Naive thymus-derived CD4-positive, alpha-beta T cell (primary cell): ENCODE measurements at regions of chr12 and their contacts with region 1.

Region 1: GRCh38 chr12:11981121-11981733 is 89.5 kb upstream of the BCL2L14 start:
- DNase-seq: peak; percentile 12 to 87 (median 75)
- ATAC-seq: peak; percentile 95
- H3K4me3 ChIP-seq: peak overlapping the region; percentile 2
- H3K4me3 Mint-ChIP-seq: peak overlapping the region; percentile 2 to 71 (median 56)
- H3K27ac ChIP-seq: peak overlapping the region; percentile 52
- H3K27ac Mint-ChIP-seq: peak overlapping the region; percentile 66 to 98 (median 82)
- H3K4me1 ChIP-seq: peaks cover 23 to 28% of the 10 kb centered on the region in 2 donors
- H3K4me1 Mint-ChIP-seq: peaks cover 26 to 69% (median 48%) of the 10 kb centered on the region in 7 donors
- H3K27me3 ChIP-seq: no peaks in the 10 kb centered on the region
- H3K27me3 Mint-ChIP-seq: peaks cover 0 to 2% (median 0%) of the 10 kb centered on the region in 5 donors

Region 2: GRCh38 chr12:11901701-11902524 is 79.3 kb before region 1 on chr12:
- CTCF ChIA-PET with region 1: no interaction called
- POLR2A ChIA-PET with region 1: interaction called, 3 read pairs
- intact Hi-C with region 1: loop called in 1 of 2 experiments (anchors 1 kb)
- DNase-seq: peak in 1 of 9 donors; percentile 79
- ATAC-seq: no peak
- H3K4me3 ChIP-seq: no peak overlapping the region
- H3K4me3 Mint-ChIP-seq: peak overlapping the region in 8 of 10 donors; percentile 10 to 71 (median 36)
- H3K27ac ChIP-seq: no peak overlapping the region
- H3K27ac Mint-ChIP-seq: peak overlapping the region in 3 of 9 donors; percentile 29 to 73 (median 71)
- H3K4me1 ChIP-seq: peaks cover 0 to 6% of the 10 kb centered on the region in 2 donors
- H3K4me1 Mint-ChIP-seq: peaks cover 17 to 60% (median 44%) of the 10 kb centered on the region in 7 donors
- H3K27me3 ChIP-seq: no peaks in the 10 kb centered on the region
- H3K27me3 Mint-ChIP-seq: no peaks in the 10 kb centered on the region

Region 3: GRCh38 chr12:11958221-11959091 is 22.8 kb before region 1 on chr12:
- CTCF ChIA-PET with region 1: no interaction called
- POLR2A ChIA-PET with region 1: no interaction called
- intact Hi-C with region 1: loop called in 1 of 2 experiments (anchors 1 kb)
- DNase-seq: peak in 1 of 9 donors; percentile 65
- ATAC-seq: peak; percentile 34
- H3K4me3 ChIP-seq: no peak overlapping the region
- H3K4me3 Mint-ChIP-seq: peak overlapping the region in 1 of 10 donors; percentile 70
- H3K27ac ChIP-seq: no peak overlapping the region
- H3K27ac Mint-ChIP-seq: peak overlapping the region in 3 of 9 donors; percentile 9 to 93 (median 53)
- H3K4me1 ChIP-seq: peaks cover 0 to 4% of the 10 kb centered on the region in 2 donors
- H3K4me1 Mint-ChIP-seq: peaks cover 15 to 54% (median 20%) of the 10 kb centered on the region in 7 donors
- H3K27me3 ChIP-seq: no peaks in the 10 kb centered on the region
- H3K27me3 Mint-ChIP-seq: peaks cover 0 to 5% (median 0%) of the 10 kb centered on the region in 5 donors

Region 4: DNA sequence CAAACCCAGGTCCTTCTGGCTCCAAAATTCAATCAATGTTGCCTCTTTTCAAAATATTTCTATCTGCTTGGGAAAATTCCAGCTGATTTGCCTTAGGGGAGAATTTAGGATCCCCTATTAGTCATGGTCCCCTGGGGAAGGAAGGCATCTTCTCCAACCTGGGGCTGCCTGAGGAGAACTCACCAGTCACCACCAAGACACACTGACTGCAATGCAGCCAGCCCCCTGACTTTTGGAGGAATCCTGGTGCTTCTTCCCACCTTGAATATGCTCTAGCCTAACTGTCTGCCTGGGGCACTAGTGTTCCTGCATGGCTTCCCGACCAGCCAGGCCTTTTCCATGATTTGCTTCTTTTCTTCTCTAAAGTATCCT is 17.7 kb after region 1 on chr12:
- CTCF ChIA-PET with region 1: interaction called, 3 read pairs
- POLR2A ChIA-PET with region 1: interaction called, 6 read pairs
- intact Hi-C with region 1: loop called (anchors 1 to 2 kb)
- DNase-seq: no peak
- ATAC-seq: no peak
- H3K4me3 ChIP-seq: peak overlapping the region; percentile 48
- H3K4me3 Mint-ChIP-seq: peak overlapping the region; percentile 18 to 75 (median 58)
- H3K27ac ChIP-seq: peak overlapping the region; percentile 39
- H3K27ac Mint-ChIP-seq: peak overlapping the region; percentile 67 to 95 (median 92)
- H3K4me1 ChIP-seq: peaks cover 18 to 19% of the 10 kb centered on the region in 2 donors
- H3K4me1 Mint-ChIP-seq: peaks cover 22 to 61% (median 46%) of the 10 kb centered on the region in 7 donors
- H3K27me3 ChIP-seq: no peaks in the 10 kb centered on the region
- H3K27me3 Mint-ChIP-seq: no peaks in the 10 kb centered on the region